Activated CD4-positive, alpha-beta T cell treated with anti-CD3 and anti-CD28 coated beads for 36 hours (primary cell): ENCODE measurements at regions of chr12 and their contacts with region 1.

Region 1: GRCh38 chr12:110776410-110776809 is 33.7 kb upstream of the PPP1CC start:
- DNase-seq: peak; percentile 81
- ATAC-seq: peak; percentile 84
- H3K4me3 Mint-ChIP-seq: peak overlapping the region; percentile 9
- H3K27ac Mint-ChIP-seq: peak overlapping the region; percentile 98
- H3K4me1 Mint-ChIP-seq: peaks cover 74% of the 10 kb centered on the region
- H3K27me3 Mint-ChIP-seq: no peaks in the 10 kb centered on the region

Region 2: DNA sequence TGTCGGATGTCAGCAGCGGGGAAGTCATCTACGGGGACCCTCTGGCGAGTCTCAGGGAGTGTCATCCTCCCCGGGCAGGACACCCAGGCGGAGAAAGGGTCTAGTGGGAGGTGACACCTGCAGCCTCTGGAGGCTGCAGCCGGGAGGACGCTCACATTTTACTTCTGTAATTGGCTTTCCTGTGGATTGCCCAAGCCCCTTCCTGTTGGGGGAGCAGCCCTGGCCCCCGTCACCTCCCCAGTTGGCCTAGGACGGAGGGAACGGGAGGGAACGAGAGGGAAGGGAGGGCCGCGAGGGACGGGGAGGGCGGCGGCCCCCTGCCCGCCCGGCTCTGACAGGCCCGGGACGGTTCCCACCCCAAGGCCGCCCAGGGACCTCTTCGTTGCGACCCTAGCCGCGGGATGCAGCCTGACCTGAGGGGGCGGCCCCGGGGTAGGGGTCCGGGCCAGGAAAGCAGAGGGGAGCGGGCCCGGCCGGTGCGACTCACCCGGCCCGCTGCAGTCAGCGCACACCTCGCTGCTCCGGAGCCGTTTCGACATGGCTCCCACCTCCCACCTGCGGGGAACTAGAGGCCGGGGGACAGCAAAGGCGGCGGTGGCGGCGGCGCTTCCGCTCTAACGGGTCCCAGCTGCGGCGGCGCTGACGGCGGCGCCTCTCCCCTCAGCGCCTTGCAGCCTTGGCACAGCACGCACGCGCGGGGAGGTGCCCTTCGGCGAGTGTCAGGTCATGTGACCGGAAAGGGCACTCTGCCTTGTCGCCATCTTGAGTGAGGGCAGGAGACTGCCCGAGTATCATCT is 780.5 kb before region 1 on chr12 and contains the start of gene GIT2:
- CTCF ChIA-PET with region 1: no interaction called
- POLR2A ChIA-PET with region 1: no interaction called
- intact Hi-C with region 1: loop called in 1 of 2 experiments (anchors 2 kb)
- DNase-seq: peak; percentile 98
- ATAC-seq: peak; percentile 85
- H3K4me3 Mint-ChIP-seq: peak within 1 kb of the TSS; percentile 99
- H3K27ac Mint-ChIP-seq: peak within 1 kb of the TSS; percentile 97
- H3K4me1 Mint-ChIP-seq: peaks cover 65% of the 10 kb centered on the region
- H3K27me3 Mint-ChIP-seq: no peaks in the 10 kb centered on the region
- total RNA-seq, gene GIT2: 50.2 to 58.2 TPM

Region 3: GRCh38 chr12:110613771-110614684 is 162.4 kb before region 1 on chr12 and contains the start of gene TCTN1:
- CTCF ChIA-PET with region 1: no interaction called
- POLR2A ChIA-PET with region 1: no interaction called
- intact Hi-C with region 1: loop called (anchors 1 kb)
- DNase-seq: peak; percentile 99
- ATAC-seq: peak; percentile 99
- H3K4me3 Mint-ChIP-seq: peak within 1 kb of the TSS; percentile 78
- H3K27ac Mint-ChIP-seq: peak within 1 kb of the TSS; percentile 67
- H3K4me1 Mint-ChIP-seq: peaks cover 12% of the 10 kb centered on the region
- H3K27me3 Mint-ChIP-seq: no peaks in the 10 kb centered on the region
- total RNA-seq, gene TCTN1: 7.2 to 7.3 TPM

Region 4: GRCh38 chr12:110742718-110743570 is 33.5 kb before region 1 on chr12 and contains the start of gene PPP1CC:
- CTCF ChIA-PET with region 1: interaction called, 5 read pairs
- POLR2A ChIA-PET with region 1: interaction called, 13 read pairs
- intact Hi-C with region 1: loop called (anchors 1 kb)
- DNase-seq: peak; percentile 95
- ATAC-seq: peak; percentile 85
- H3K4me3 Mint-ChIP-seq: peak within 1 kb of the TSS; percentile 98
- H3K27ac Mint-ChIP-seq: peak within 1 kb of the TSS; percentile 99
- H3K4me1 Mint-ChIP-seq: peaks cover 34% of the 10 kb centered on the region
- H3K27me3 Mint-ChIP-seq: no peaks in the 10 kb centered on the region
- total RNA-seq, gene PPP1CC: 201 to 283 TPM

Region 5: GRCh38 chr12:111056618-111057521 is 280.5 kb after region 1 on chr12:
- CTCF ChIA-PET with region 1: no interaction called
- POLR2A ChIA-PET with region 1: no interaction called
- intact Hi-C with region 1: loop called in 1 of 2 experiments (anchors 1 kb)
- DNase-seq: peak; percentile 83
- ATAC-seq: peak; percentile 93
- H3K4me3 Mint-ChIP-seq: peak overlapping the region; percentile 6
- H3K27ac Mint-ChIP-seq: peak overlapping the region; percentile 99
- H3K4me1 Mint-ChIP-seq: peaks cover 28% of the 10 kb centered on the region
- H3K27me3 Mint-ChIP-seq: no peaks in the 10 kb centered on the region